ACHN (cell line): ENCODE measurements at regions of chr10 and their contacts with region 1.

Region 1: GRCh38 chr10:119416855-119417254 is 125.7 kb downstream of the RGS10 start:
- DNase-seq: peak; percentile 68

Region 2: GRCh38 chr10:119207367-119207668 is 209.5 kb before region 1 on chr10 and contains the start of gene GRK5:
- in situ Hi-C with region 1: loop called (anchors 25 kb)
- DNase-seq: peak; percentile 98

Region 3: GRCh38 chr10:119859420-119860258 is 442.8 kb after region 1 on chr10:
- in situ Hi-C with region 1: no loop called
- DNase-seq: peak; percentile 61